CD8-positive, alpha-beta memory T cell (primary cell): ENCODE measurements at regions of chr11 and their contacts with region 1.

Region 1: DNA sequence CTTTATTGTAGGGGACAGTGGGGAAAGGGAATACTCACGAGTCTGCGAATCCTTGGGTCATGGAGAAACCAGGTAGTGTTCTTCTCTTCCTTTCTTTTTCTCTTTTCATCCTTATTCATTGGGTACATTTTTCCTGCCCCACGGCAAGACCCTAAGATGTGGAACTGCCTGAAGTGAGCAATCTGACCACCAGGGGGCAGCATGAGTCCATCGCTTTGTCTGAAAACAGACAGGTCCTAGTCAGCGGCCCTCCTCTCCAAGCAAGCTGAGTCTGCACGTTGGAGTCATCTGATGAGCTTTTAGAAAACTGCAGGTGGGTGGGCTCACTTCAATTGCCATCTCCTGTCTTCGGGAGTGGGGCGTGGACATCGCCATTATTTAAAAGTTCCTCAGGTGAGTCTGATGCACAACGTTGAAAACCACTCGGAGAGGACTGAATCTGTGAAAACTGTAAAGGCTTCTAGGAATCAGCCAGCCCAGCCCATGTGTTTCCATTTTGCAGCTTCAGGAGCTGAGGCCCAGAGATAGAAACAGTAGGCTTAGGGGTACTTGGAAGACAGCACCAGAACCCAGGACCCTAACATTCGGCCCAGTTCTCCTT is 34.0 kb upstream of the FBXO3 start:
- DNase-seq: peak; percentile 64 to 86 (median 76)
- H3K4me3 ChIP-seq: no peak overlapping the region
- H3K4me3 Mint-ChIP-seq: no peak overlapping the region
- H3K27ac ChIP-seq: no peak overlapping the region
- H3K27ac Mint-ChIP-seq: no peak overlapping the region
- H3K4me1 ChIP-seq: no peaks in the 10 kb centered on the region
- H3K4me1 Mint-ChIP-seq: peaks cover 0 to 3% (median 3%) of the 10 kb centered on the region in 3 donors
- H3K27me3 ChIP-seq: peaks cover 6% of the 10 kb centered on the region
- H3K27me3 Mint-ChIP-seq: peaks cover 8 to 31% of the 10 kb centered on the region in 2 donors

Region 2: GRCh38 chr11:33829433-33830141 is 21.3 kb after region 1 on chr11:
- CTCF ChIA-PET with region 1: interaction called, 25 read pairs
- POLR2A ChIA-PET with region 1: no interaction called
- DNase-seq: peak; percentile 19 to 58 (median 35)
- H3K4me3 ChIP-seq: peak overlapping the region; percentile 47
- H3K4me3 Mint-ChIP-seq: peak overlapping the region in 6 of 7 donors; percentile 12 to 82 (median 73)
- H3K27ac ChIP-seq: no peak overlapping the region
- H3K27ac Mint-ChIP-seq: peak overlapping the region in 2 of 8 donors; percentile 12 to 45
- H3K4me1 ChIP-seq: peaks cover 4% of the 10 kb centered on the region
- H3K4me1 Mint-ChIP-seq: peaks cover 5 to 8% (median 6%) of the 10 kb centered on the region in 3 donors
- H3K27me3 ChIP-seq: peaks cover 18% of the 10 kb centered on the region
- H3K27me3 Mint-ChIP-seq: peaks cover 29 to 79% of the 10 kb centered on the region in 2 donors

Region 3: GRCh38 chr11:33857933-33858371 is 49.6 kb after region 1 on chr11:
- CTCF ChIA-PET with region 1: no interaction called
- POLR2A ChIA-PET with region 1: no interaction called
- DNase-seq: peak; percentile 43 to 72 (median 45)
- H3K4me3 ChIP-seq: no peak overlapping the region
- H3K4me3 Mint-ChIP-seq: no peak overlapping the region
- H3K27ac ChIP-seq: no peak overlapping the region
- H3K27ac Mint-ChIP-seq: peak overlapping the region in 1 of 8 donors; percentile 45
- H3K4me1 ChIP-seq: no peaks in the 10 kb centered on the region
- H3K4me1 Mint-ChIP-seq: no peaks in the 10 kb centered on the region
- H3K27me3 ChIP-seq: peaks cover 4% of the 10 kb centered on the region
- H3K27me3 Mint-ChIP-seq: peaks cover 20 to 68% of the 10 kb centered on the region in 2 donors

Region 4: GRCh38 chr11:33987975-33988580 is 179.8 kb after region 1 on chr11:
- CTCF ChIA-PET with region 1: interaction called, 13 read pairs
- POLR2A ChIA-PET with region 1: no interaction called
- DNase-seq: peak; percentile 58 to 81 (median 64)
- H3K4me3 ChIP-seq: no peak overlapping the region
- H3K4me3 Mint-ChIP-seq: no peak overlapping the region
- H3K27ac ChIP-seq: no peak overlapping the region
- H3K27ac Mint-ChIP-seq: no peak overlapping the region
- H3K4me1 ChIP-seq: no peaks in the 10 kb centered on the region
- H3K4me1 Mint-ChIP-seq: peaks cover 4 to 11% (median 11%) of the 10 kb centered on the region in 3 donors
- H3K27me3 ChIP-seq: no peaks in the 10 kb centered on the region
- H3K27me3 Mint-ChIP-seq: peaks cover 8 to 12% of the 10 kb centered on the region in 2 donors